Motor neuron (in vitro differentiated cells): ENCODE measurements at regions of chr10 and their contacts with region 1.

Region 1: GRCh38 chr10:58952747-58953466 is 223.5 kb upstream of the PHYHIPL start:
- ATAC-seq: peak; percentile 54 to 79 (median 76)
- H3K4me3 ChIP-seq: no peak overlapping the region
- H3K27ac ChIP-seq: no peak overlapping the region
- H3K4me1 ChIP-seq: peaks cover 3 to 14% of the 10 kb centered on the region in 2 donors

Region 2: GRCh38 chr10:58641095-58641531 is 311.8 kb before region 1 on chr10:
- in situ Hi-C with region 1: no loop called
- ATAC-seq: peak in 6 of 8 experiments; percentile 16 to 64 (median 57)
- H3K4me3 ChIP-seq: no peak overlapping the region
- H3K27ac ChIP-seq: peak overlapping the region in 1 of 2 donors; percentile 54
- H3K4me1 ChIP-seq: peaks cover 11 to 27% of the 10 kb centered on the region in 2 donors

Region 3: GRCh38 chr10:59173414-59173813 is 220.5 kb after region 1 on chr10:
- in situ Hi-C with region 1: loop called in 3 of 9 experiments (anchors 25 kb)
- ATAC-seq: no peak
- H3K4me3 ChIP-seq: no peak overlapping the region
- H3K27ac ChIP-seq: no peak overlapping the region
- H3K4me1 ChIP-seq: peaks cover 0 to 8% of the 10 kb centered on the region in 2 donors

Region 4: GRCh38 chr10:59181668-59182067 is 228.8 kb after region 1 on chr10:
- in situ Hi-C with region 1: loop called in 2 of 9 experiments (anchors 25 kb)
- ATAC-seq: peak; percentile 29 to 71 (median 49)
- H3K4me3 ChIP-seq: peak overlapping the region in 1 of 5 donors; percentile 5
- H3K27ac ChIP-seq: no peak overlapping the region
- H3K4me1 ChIP-seq: peaks cover 2 to 14% of the 10 kb centered on the region in 2 donors

Region 5: GRCh38 chr10:59222788-59223187 is 269.9 kb after region 1 on chr10:
- in situ Hi-C with region 1: loop called in 1 of 9 experiments (anchors 25 kb)
- ATAC-seq: peak in 1 of 8 experiments; percentile 50
- H3K4me3 ChIP-seq: no peak overlapping the region
- H3K27ac ChIP-seq: no peak overlapping the region
- H3K4me1 ChIP-seq: no peaks in the 10 kb centered on the region

Region 6: DNA sequence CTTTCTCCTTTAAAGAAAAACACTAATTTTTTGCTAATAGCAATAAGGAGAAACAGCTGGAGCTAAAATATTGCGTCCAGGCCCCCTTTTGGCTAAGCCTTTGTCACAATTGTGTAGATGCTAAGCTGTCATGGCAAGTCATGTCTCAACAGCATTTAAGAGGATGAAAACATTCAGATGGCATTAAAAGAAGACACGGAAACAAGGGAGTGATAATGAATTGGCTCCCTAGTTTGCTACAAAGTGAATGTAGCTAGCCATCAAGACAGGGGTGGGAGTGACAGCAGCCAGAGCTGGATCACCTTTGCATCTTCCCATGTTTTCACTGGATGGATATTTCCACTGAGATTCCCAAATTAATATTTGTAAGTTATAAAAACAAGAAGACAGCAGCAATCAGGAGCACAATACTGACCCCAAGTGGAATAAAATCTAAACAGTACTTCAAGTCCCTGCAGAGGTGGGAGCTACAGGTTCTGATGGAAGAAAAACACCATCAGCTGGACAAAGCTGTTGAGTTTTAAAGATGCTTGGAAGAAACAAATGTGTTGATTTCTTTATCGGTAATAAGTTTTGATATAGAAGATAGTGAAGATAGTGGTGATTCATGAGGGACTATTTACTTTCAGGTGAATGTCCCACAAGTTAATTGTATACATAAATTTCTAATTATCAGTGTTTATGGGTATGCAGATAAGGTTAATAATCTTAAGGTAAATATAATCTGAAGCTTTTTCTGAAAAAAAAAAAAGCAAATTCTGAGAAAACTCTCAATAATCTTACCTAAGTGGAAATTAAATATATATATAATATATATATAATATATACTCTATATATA is 627.3 kb after region 1 on chr10:
- in situ Hi-C with region 1: loop called in 1 of 9 experiments (anchors 25 kb)
- ATAC-seq: peak in 4 of 8 experiments; percentile 29 to 67 (median 50)
- H3K4me3 ChIP-seq: no peak overlapping the region
- H3K27ac ChIP-seq: no peak overlapping the region
- H3K4me1 ChIP-seq: peaks cover 0 to 4% of the 10 kb centered on the region in 2 donors

Region 7: DNA sequence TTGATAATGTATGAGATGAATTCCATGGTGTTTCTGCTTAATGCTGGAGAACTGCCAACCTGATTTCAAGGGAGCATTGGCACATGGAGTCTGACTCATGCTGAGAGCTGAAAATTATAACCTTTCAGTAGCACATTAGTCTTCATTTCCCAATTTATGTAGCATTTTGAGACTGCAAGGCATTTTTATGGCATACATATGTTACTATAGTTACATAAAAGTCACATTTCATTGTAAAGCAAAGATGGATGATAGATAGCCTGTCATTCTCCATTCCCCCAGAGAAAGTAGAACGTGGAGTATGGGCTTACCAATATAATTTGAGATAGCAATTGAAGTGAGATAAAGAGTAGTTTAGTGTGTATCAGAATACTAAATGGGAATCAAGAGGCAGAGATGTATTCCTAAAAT is 653.6 kb after region 1 on chr10:
- in situ Hi-C with region 1: loop called in 1 of 9 experiments (anchors 25 kb)
- ATAC-seq: peak in 4 of 8 experiments; percentile 61 to 71 (median 65)
- H3K4me3 ChIP-seq: no peak overlapping the region
- H3K27ac ChIP-seq: no peak overlapping the region
- H3K4me1 ChIP-seq: peaks cover 0 to 6% of the 10 kb centered on the region in 2 donors